Cardiac septum (tissue), 1 donor: ENCODE measurements at regions of chr12 and their contacts with region 1.

Region 1: GRCh38 chr12:102061560-102062418 is at the start of gene WASHC3:
- DNase-seq: peak; percentile 98
- total RNA-seq, gene WASHC3: 38.5 TPM

Region 2: GRCh38 chr12:102119674-102120563 is 58.1 kb after region 1 on chr12 and contains the starts of genes NUP37 and PARPBP:
- intact Hi-C with region 1: loop called (anchors 2 kb)
- DNase-seq: peak; percentile 95
- total RNA-seq, gene NUP37: 16.0 TPM
- total RNA-seq, gene PARPBP: 0.51 TPM